ENCODE measurements at regions of chr10 and their contacts with region 1.

Region 1: GRCh38 chr10:28676968-28677887 is at the start of gene BAMBI:
- DNase-seq: peak; percentile 43 to 93
- H3K4me3 ChIP-seq: peak within 1 kb of the TSS; percentile 55
- H3K27ac ChIP-seq: no peak within 1 kb of the TSS
- H3K4me1 ChIP-seq: no peaks in the 10 kb centered on the region
- H3K27me3 ChIP-seq: peaks cover 8% of the 10 kb centered on the region; the same call in 1 of the 2 replicates
- CTCF ChIP-seq: peak; percentile 28; the same call in 1 of the 2 replicates
- total RNA-seq, gene BAMBI: 3.3 and 4.5 TPM in 2 replicates

Region 2: GRCh38 chr10:28690545-28690944 is 13.3 kb after region 1 on chr10:
- CTCF ChIA-PET with region 1: no interaction called
- POLR2A ChIA-PET with region 1: no interaction called
- intact Hi-C with region 1: no loop called
- DNase-seq: no peak
- H3K4me3 ChIP-seq: no peak overlapping the region
- H3K27ac ChIP-seq: no peak overlapping the region
- H3K4me1 ChIP-seq: peaks cover 1% of the 10 kb centered on the region; the same call in 1 of the 2 replicates
- H3K27me3 ChIP-seq: 0 out of 2 replicates have a peak, but pooled peaks cover 2% of the 10 kb centered on the region
- CTCF ChIP-seq: no peak

Region 3: DNA sequence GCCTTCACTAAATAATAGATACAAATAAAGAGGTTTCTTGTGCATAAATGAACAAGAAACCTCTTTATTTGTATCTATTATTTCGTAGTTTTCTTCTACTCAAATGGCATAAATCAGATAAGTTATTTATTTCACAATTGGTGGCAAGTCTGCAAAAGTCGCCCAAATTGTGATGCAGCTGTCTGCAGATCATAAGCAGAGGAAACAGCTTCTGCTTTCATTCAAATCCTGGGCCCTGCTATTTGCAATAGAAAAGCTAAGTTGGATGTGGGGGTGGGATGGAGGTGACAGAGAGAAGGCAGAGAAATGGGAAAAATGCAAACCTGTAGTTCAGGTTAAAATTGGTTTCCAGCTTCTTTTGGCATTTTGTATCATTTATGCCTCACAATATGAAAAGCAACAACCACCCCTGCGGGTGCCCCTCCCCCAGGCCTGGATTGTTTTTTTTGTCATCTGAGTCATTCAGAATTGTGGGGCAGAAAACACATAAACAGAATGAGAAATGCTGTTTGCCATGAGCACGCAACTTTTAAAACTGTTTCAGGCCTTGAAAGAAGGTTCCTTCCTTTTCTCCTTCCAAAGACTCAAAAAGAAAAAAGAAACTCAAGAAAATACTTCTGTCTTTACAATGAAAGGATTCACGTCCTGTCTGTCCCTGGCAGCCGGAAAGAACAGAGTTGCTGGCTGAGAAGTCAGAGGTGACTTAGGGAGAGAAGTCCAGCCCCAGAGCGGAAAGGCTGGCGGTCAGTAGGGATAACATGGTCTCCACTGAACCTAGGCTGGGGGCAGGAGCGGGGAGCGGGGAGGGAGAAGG is 133.0 kb after region 1 on chr10:
- CTCF ChIA-PET with region 1: no interaction called
- POLR2A ChIA-PET with region 1: no interaction called
- intact Hi-C with region 1: loop called (anchors 10 kb)
- DNase-seq: no peak
- H3K4me3 ChIP-seq: no peak overlapping the region
- H3K27ac ChIP-seq: no peak overlapping the region
- H3K4me1 ChIP-seq: no peaks in the 10 kb centered on the region
- H3K27me3 ChIP-seq: no peaks in the 10 kb centered on the region
- CTCF ChIP-seq: no peak

Region 4: DNA sequence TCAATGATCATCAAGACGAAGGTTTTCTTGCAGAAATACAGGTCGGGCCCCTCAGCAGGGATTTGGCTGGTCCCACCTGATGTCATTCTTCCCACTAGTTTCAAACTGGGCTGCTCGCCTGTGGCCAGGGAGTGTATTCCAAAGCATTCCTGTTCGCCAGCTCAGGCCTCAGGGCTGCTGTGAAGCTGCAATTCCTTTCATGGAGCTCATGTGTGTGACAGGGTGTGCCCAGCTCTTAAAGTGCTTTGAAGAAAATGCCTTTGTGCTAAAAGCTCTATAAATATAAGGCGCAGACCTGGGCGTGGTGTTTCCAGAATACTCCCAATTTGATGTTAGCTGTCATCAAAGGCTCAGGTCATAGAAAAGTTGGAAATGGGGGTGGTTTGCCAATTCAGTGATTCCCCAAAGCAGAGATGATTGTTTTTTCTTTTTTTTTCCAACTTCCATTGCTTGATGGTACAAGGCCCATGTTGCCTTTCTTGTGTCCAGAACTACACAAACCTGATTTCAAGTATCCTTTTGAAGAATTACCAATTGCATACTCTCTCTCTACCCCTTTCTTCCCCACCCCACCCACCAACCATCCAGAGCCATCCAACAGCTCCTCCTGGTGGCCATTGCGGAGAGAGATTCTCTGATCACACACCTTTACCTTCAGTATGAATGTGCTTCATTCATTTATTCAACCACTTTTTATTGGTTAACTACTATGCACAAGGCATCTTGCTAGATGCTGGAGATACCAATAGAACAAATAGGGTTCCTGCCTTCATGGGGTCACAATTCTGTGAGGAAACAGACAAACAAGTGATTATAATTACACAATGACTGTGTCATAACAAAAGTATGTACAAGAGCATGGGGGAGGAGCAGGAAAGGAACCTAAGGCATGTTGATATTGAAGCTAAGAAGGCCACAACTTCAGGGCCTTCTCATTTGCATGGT is 314.4 kb after region 1 on chr10:
- CTCF ChIA-PET with region 1: interaction called, 3 read pairs
- POLR2A ChIA-PET with region 1: no interaction called
- intact Hi-C with region 1: loop called (anchors 5 kb)
- DNase-seq: peak; percentile 42 to 49
- H3K4me3 ChIP-seq: no peak overlapping the region
- H3K27ac ChIP-seq: no peak overlapping the region
- H3K4me1 ChIP-seq: no peaks in the 10 kb centered on the region
- H3K27me3 ChIP-seq: no peaks in the 10 kb centered on the region
- CTCF ChIP-seq: peak; percentile 68

Region 5: DNA sequence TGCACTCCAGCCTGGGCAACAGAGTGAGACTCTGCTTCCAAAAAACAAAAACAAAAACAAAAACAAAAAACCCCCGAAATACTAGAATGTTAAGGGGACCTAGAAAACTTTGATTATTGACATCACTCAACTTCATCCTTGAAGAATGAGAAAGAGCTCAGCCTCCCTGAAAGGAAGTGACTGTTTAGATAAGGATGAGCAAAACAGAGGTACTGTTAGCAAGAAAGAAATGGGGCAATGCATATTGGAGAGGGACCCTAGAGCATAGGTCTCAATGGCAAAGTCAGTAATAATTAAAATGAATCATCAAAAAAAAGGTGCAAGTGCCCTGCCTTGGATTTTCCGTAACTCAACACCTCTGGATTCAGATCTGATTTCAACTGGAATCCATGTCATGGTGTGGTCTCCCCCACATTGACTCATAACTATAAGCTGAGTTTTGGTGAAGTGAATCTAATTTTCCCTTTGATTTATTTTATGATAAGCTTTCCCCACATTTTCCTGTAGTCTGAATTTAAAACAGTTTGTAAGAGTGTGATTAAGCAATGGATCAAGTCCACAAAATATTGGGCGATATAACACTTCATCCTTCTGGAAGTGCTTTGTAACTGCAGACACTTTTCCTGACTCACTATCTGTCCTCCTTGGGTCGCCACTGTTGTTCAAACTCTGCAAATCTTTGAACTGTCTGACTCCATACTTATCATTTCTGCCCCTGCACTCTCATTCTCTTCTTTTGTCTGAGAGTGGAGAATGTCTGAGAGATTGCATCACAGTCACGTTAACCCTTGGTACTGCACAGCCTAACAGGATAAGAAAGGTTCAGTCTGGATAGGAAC is 386.8 kb after region 1 on chr10:
- CTCF ChIA-PET with region 1: no interaction called
- POLR2A ChIA-PET with region 1: no interaction called
- intact Hi-C with region 1: loop called (anchors 5 kb)
- DNase-seq: peak; percentile 37 to 76
- H3K4me3 ChIP-seq: peak overlapping the region; percentile 29; the same call in 1 of the 2 replicates
- H3K27ac ChIP-seq: peak overlapping the region; percentile 83
- H3K4me1 ChIP-seq: peaks cover 26% of the 10 kb centered on the region
- H3K27me3 ChIP-seq: no peaks in the 10 kb centered on the region
- CTCF ChIP-seq: no peak; the same call in 1 of the 2 replicates

Region 6: GRCh38 chr10:29131952-29132820 is 455.0 kb after region 1 on chr10:
- CTCF ChIA-PET with region 1: interaction called, 3 read pairs
- POLR2A ChIA-PET with region 1: no interaction called
- intact Hi-C with region 1: loop called (anchors 2 kb)
- DNase-seq: no peak
- H3K4me3 ChIP-seq: no peak overlapping the region
- H3K27ac ChIP-seq: no peak overlapping the region
- H3K4me1 ChIP-seq: no peaks in the 10 kb centered on the region
- H3K27me3 ChIP-seq: no peaks in the 10 kb centered on the region
- CTCF ChIP-seq: no peak

Measured in PC-9 (cell line).